ENCODE measurements at regions of chr19 and their contacts with region 1.

Region 1: GRCh38 chr19:2950286-2951124 is 5.7 kb upstream of the ZNF77 start:
- DNase-seq: peak; percentile 99
- H3K4me3 Mint-ChIP-seq: peak overlapping the region; percentile 95
- H3K27ac Mint-ChIP-seq: peak overlapping the region; percentile 90
- H3K4me1 Mint-ChIP-seq: peaks cover 20% of the 10 kb centered on the region
- H3K27me3 Mint-ChIP-seq: no peaks in the 10 kb centered on the region

Region 2: DNA sequence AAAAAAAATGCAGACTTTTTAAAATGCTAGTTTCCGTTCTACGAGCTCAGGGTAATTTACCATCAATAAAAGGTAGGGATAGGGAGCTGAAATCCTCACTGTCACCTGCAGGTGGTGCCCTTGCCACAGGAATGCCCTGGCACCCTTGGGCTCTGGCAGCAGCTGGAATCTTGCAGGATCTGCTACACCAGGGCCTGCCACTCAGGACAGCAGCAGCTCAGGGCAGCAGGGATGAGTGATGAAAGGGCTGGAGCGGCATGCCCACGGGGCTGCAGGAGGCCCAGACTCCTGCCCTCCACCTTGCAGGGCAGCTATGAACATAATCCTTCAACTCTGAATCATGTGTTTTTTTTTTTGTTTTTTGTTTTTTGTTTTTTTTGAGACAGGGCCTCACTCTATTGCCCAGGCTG is 302.0 kb before region 1 on chr19:
- intact Hi-C with region 1: loop called (anchors 2 kb)
- DNase-seq: peak; percentile 59
- H3K4me3 Mint-ChIP-seq: no peak overlapping the region
- H3K27ac Mint-ChIP-seq: no peak overlapping the region
- H3K4me1 Mint-ChIP-seq: no peaks in the 10 kb centered on the region
- H3K27me3 Mint-ChIP-seq: no peaks in the 10 kb centered on the region

Region 3: DNA sequence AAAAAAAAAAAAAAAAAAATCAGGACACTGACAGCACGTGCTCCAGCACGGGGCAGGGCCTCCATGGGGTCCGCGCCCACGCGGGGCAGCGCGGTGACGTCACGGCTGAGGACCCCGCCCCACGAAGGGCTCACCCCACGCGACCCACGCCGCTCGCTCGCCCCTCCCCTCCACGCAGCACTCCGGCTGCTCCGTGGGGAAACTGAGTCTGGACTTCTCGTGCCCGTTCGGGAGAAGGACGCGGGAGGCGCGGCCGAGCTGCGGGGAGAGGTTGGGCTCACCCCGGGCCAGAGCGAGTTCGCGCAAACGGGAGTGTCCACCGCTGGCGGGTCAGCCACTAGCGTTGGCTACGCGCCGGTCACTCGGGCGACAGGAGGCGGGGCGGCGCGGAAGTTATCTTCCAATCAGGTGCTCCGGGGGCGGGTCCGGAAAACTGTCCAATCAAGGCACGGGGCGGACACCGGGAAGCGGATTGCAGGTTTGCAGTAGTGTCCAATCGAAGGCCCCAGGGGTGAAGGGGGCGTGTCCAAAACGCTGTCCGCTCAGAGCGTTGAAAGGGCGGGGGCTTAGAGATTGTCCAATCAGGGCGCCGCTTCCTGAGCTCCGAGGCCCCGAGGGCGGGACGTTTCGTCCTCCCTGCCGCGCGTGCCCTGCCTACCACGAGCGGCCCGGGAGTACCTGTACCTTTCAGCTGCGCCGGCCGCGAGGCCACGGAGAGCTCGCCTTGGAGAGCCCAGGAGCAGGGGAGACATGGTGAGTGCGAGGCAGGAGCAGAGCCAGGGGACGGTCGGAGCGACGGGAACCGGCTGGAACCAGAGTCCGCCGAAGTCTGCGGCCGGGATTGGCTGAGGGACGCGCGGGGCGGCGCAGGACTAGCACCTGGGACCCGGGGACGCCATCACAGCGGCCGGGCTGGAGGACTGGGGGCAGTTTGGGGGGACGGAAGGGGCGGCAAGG is 49.9 kb before region 1 on chr19 and contains the start of gene ZNF57:
- intact Hi-C with region 1: loop called (anchors 2 kb)
- DNase-seq: peak; percentile 87
- H3K4me3 Mint-ChIP-seq: peak within 1 kb of the TSS; percentile 93
- H3K27ac Mint-ChIP-seq: peak within 1 kb of the TSS; percentile 85
- H3K4me1 Mint-ChIP-seq: peaks cover 4% of the 10 kb centered on the region
- H3K27me3 Mint-ChIP-seq: no peaks in the 10 kb centered on the region
- total RNA-seq, gene ZNF57: 2.2 and 2.6 TPM in 2 replicates

Region 4: GRCh38 chr19:3035542-3036118 is 85.1 kb after region 1 on chr19:
- intact Hi-C with region 1: loop called (anchors 1 kb)
- DNase-seq: peak; percentile 95
- H3K4me3 Mint-ChIP-seq: peak overlapping the region; percentile 94
- H3K27ac Mint-ChIP-seq: peak overlapping the region; percentile 98
- H3K4me1 Mint-ChIP-seq: peaks cover 18% of the 10 kb centered on the region
- H3K27me3 Mint-ChIP-seq: peaks cover 23% of the 10 kb centered on the region

Region 5: DNA sequence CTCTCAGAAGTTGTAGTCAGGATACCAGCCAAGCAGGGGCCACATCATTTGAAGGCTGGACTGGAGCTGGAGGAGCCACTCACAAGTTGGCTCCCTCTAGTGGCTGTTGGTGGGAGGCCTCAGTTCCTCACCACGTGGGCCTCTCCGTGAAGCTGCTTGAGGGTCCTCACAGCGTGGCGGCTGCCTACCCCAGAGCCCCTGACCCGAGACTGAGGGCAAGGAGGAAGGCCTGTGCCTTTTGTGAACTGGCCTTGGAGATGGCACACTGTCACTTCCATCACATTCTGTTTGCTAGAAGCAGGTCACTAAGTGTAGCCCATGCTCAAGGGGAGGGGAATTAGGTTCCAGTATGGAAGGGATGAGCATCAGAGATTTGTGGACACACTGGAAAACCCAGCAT is 158.3 kb after region 1 on chr19:
- intact Hi-C with region 1: loop called (anchors 1 kb)
- DNase-seq: peak; percentile 45
- H3K4me3 Mint-ChIP-seq: no peak overlapping the region
- H3K27ac Mint-ChIP-seq: peak overlapping the region; percentile 49
- H3K4me1 Mint-ChIP-seq: peaks cover 5% of the 10 kb centered on the region
- H3K27me3 Mint-ChIP-seq: peaks cover 3% of the 10 kb centered on the region

Region 6: GRCh38 chr19:3185482-3186376 is 235.2 kb after region 1 on chr19 and contains the start of gene NCLN:
- intact Hi-C with region 1: loop called (anchors 1 kb)
- DNase-seq: peak; percentile 91
- H3K4me3 Mint-ChIP-seq: peak within 1 kb of the TSS; percentile 93
- H3K27ac Mint-ChIP-seq: peak within 1 kb of the TSS; percentile 90
- H3K4me1 Mint-ChIP-seq: peaks cover 45% of the 10 kb centered on the region
- H3K27me3 Mint-ChIP-seq: no peaks in the 10 kb centered on the region
- total RNA-seq, gene NCLN: 112 and 118 TPM in 2 replicates

Region 7: DNA sequence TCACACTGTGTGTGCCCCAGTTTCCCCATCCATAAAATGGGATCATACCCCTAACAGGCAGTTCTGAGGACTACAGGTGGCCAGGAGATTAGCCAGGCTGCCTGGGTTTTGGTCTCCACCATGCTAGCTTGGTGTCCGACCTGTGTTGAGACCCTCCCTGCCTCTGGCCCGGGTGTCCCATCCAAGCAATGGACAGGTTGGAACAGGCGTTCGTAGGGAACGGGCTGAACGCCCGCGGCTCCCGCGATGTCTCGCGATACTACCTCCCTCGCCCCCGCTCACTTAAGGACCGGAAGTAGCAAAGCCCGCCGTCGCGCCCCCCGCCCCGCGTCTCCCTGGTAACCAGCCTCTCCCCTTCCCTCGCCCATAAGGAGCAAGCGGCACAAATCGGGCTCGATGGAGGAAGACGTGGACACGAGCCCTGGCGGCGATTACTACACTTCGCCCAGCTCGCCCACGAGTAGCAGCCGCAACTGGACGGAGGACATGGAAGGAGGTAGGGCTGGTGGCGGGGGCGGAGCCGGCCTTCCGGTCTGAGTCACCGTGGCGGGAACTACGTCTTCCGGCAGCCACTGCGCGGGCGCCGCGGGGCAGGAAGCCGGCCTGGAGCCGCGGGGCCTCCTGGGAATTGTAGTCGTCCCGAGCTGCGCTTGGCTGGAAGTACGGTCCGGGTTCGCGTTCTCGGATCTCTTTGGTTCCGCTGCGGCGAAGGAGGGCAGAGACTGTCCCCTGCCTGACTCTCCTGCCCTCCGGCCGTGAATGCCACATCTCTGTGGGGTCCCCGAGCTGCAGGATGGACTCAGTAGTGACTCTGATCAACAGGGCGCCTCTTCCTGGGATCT is 484.4 kb after region 1 on chr19:
- intact Hi-C with region 1: loop called (anchors 1 kb)
- DNase-seq: peak; percentile 95
- H3K4me3 Mint-ChIP-seq: peak overlapping the region; percentile 95
- H3K27ac Mint-ChIP-seq: peak overlapping the region; percentile 97
- H3K4me1 Mint-ChIP-seq: peaks cover 6% of the 10 kb centered on the region
- H3K27me3 Mint-ChIP-seq: peaks cover 5% of the 10 kb centered on the region

Measured in activated T-helper 1 cell treated with anti-CD3 and anti-CD28 coated beads, Interleukin-12 subunit alpha, Interleukin-12 subunit beta, Interleukin-2, Interleukin-4 antibody, amounts not matched to agents 30 ng/mL and 10 ng/mL and 1 ng/mL, durations not matched to agents 14 hours and 24 hours and 36 hours (primary cell).